GM12878 (cell line): ENCODE measurements at regions of chr12 and their contacts with region 1.

Region 1: GRCh38 chr12:39095636-39096330 is 190.4 kb upstream of the CPNE8 start:
- DNase-seq: no peak
- ATAC-seq: no peak
- H3K4me3 ChIP-seq: no peak overlapping the region
- H3K27ac ChIP-seq: no peak overlapping the region
- H3K4me1 ChIP-seq: no peaks in the 10 kb centered on the region
- H3K27me3 ChIP-seq: no peaks in the 10 kb centered on the region
- CTCF ChIP-seq: peak in 1 of 3 experiments; percentile 18; a peak in 1 of 6 replicates
- EP300 ChIP-seq: no peak
- POLR2A ChIP-seq: no peak
- RAD21 ChIP-seq: no peak

Region 2: DNA sequence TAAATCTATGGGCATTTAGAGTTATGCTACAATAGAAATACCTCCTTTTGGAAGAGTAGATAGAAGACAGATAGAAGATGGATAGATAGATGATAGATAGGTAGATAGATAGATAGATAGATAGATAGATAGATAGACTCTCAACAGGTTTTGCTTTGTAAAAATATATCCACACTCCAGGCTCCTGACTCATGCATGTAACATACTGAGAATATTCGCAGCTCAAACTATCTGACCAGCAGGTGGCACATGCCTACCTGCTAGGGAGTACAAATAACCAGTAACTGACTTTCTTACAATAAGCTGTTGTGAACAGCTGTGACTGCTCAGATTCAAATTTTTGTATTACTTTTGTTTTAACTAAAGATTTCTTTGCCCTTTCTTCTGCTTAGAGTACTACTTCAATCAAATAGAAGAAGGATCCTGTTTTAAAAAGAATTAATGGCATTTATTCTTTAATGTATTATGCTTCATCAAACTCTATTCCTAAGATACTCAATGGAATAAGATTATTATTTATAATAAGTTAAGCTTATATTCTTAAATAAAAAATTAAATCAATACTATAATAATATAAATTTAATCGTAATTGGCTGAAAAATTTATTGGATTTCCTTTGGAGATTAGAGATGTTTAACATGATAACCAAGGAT is 174.6 kb before region 1 on chr12:
- CTCF ChIA-PET with region 1: interaction called, 118 read pairs
- POLR2A ChIA-PET with region 1: no interaction called
- RAD21 ChIA-PET with region 1: interaction called, 8 read pairs
- SMC1A ChIA-PET with region 1: interaction called, 90 read pairs
- in situ Hi-C with region 1: loop called (anchors 5 kb)
- intact Hi-C with region 1: no loop called
- DNase-seq: no peak
- ATAC-seq: peak; percentile 95
- H3K4me3 ChIP-seq: no peak overlapping the region
- H3K27ac ChIP-seq: no peak overlapping the region
- H3K4me1 ChIP-seq: no peaks in the 10 kb centered on the region
- H3K27me3 ChIP-seq: no peaks in the 10 kb centered on the region
- CTCF ChIP-seq: peak; percentile 60 to 73 (median 61)
- EP300 ChIP-seq: no peak
- POLR2A ChIP-seq: no peak
- RAD21 ChIP-seq: peak; percentile 63